ENCODE measurements at regions of chr16 and their contacts with region 1.

Region 1: DNA sequence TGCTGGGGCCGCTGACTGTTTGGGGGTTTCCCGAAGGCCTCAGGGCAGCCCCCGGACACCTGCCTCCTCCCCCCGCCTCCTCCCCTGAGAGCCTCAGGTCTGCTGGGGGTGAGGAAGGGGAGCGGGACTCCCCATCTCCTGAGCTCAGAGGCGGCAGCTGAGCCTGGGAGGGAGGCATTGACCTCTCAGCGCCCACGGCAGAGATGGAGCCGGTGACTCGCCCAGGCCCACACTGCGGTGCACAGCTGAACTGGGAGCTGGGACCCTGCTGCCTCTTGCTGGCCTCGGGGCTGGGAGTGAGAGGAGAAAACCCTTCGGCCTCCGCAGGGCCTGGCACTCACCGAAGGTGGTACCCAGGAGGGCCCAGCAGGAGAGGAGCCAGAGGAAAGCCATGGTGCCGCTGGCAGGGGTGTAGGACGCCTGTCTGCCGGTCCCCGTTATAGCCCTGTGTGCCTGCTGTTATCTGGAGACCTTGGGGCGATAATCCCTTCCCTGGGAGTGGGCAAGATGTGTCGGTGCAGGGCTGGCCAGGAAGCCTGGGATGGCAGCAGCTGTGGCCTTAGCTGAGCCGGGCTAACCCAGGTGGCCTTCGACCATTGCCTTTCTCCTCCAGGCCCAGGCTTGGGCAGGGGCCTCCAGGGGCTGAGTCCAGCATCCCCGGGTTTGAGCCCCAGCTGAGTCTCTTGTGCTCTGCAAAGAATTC is at the start of gene CTRB2:
- DNase-seq: no peak
- H3K4me3 ChIP-seq: no peak within 1 kb of the TSS
- H3K27ac ChIP-seq: no peak within 1 kb of the TSS
- H3K4me1 ChIP-seq: no peaks in the 10 kb centered on the region
- H3K27me3 ChIP-seq: peaks cover 12% of the 10 kb centered on the region
- CTCF ChIP-seq: no peak
- total RNA-seq, gene CTRB2: not detected

Region 2: DNA sequence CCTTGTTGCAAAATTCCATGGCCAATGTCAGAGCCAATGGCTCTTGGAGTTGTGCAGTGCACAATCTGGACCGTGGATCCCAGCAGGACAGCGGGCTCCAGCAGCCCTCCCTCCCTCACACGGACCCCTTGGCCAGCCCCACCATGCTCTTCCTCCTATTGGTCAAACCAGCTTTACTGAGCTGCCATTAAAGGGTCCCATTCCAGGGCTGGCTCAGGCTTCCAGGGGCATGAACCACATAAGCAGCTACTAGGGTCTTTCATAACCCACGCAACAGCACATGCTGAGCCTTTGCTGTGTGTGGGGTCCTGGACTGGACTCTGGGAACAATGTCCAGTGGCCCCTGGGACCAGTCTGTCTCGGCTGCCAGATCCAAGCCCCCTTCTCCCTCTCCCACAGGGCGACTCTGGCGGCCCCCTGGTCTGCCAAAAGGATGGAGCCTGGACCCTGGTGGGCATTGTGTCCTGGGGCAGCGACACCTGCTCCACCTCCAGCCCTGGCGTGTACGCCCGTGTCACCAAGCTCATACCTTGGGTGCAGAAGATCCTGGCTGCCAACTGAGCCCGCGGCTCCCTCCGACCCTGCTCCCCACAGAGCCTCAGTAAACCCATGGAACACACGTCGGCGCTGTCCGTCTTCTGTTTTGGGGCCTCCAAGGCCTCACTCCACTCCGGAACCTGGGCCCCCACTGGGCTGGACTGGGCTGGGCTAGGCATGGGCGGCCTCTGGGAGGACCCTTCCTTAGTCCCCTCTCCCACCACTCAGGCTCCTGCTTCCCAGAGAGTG is 17.6 kb after region 1 on chr16:
- intact Hi-C with region 1: loop called (anchors 2 kb)
- DNase-seq: no peak
- H3K4me3 ChIP-seq: no peak overlapping the region
- H3K27ac ChIP-seq: no peak overlapping the region
- H3K4me1 ChIP-seq: peaks cover 18% of the 10 kb centered on the region
- H3K27me3 ChIP-seq: peaks cover 10% of the 10 kb centered on the region
- CTCF ChIP-seq: no peak

Region 3: GRCh38 chr16:75333721-75334163 is 126.8 kb after region 1 on chr16:
- intact Hi-C with region 1: no loop called
- DNase-seq: no peak
- H3K4me3 ChIP-seq: no peak overlapping the region
- H3K27ac ChIP-seq: no peak overlapping the region
- H3K4me1 ChIP-seq: no peaks in the 10 kb centered on the region
- H3K27me3 ChIP-seq: no peaks in the 10 kb centered on the region
- CTCF ChIP-seq: no peak

Region 4: GRCh38 chr16:75361936-75362335 is 155.0 kb after region 1 on chr16:
- intact Hi-C with region 1: no loop called
- DNase-seq: no peak
- H3K4me3 ChIP-seq: no peak overlapping the region
- H3K27ac ChIP-seq: no peak overlapping the region
- H3K4me1 ChIP-seq: peaks cover 19% of the 10 kb centered on the region
- H3K27me3 ChIP-seq: no peaks in the 10 kb centered on the region
- CTCF ChIP-seq: no peak

Measured in left ventricle myocardium inferior (tissue), 1 donor.